ENCODE measurements at regions of chr2 and their contacts with region 1.

Region 1: GRCh38 chr2:204145263-204145751 is 208.7 kb downstream of the ICOS start:
- DNase-seq: peak; percentile 78

Region 2: DNA sequence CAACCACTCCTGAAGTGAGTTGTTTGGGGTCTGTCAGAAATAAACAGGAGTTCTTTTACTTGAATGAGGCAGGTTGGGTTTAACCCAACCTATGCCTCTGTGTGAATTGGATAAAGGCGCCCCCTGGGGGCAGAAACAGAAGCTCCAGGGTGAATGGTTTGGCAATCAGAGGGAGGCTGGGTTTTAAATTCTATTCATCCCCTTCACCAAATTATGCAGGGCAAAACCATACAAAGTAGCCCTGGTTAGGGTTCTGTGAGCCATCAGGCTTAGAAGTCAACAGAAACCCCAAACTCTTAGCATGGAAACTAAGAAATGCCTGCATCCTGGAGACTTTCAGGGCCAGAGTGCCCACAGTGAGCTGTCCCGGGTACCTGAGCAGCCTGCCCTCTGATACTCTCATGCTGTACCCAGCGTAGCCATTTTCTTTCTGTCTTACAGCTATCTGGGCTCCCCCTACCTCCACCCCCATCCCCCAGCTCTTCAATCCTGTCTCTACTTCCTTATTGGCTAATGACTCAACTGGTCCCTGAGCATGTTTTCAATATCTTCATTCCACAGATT is 32.8 kb after region 1 on chr2:
- CTCF ChIA-PET with region 1: interaction called, 10 read pairs
- POLR2A ChIA-PET with region 1: no interaction called
- DNase-seq: peak; percentile 45

Region 3: DNA sequence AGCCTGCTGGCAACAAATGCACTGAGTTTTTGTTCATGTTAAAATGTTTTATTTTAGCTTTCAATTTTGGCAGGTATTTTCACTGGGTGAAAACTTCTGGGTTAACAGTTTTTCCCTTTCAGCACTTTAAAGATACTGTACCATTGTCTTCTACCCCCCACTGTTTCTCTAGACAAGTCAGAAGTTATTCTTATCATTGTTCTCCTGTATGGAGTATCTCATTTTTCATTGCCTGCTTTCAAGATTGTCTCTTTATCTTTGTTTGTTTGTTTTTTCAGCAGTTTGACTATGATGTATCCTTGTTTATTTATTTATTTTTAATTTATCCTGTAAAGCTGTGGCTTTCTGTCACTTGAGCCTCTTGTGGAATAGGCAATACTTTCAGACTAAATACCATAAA is 68.3 kb after region 1 on chr2:
- CTCF ChIA-PET with region 1: no interaction called
- POLR2A ChIA-PET with region 1: no interaction called
- DNase-seq: no peak

Region 4: GRCh38 chr2:204239411-204240165 is 94.3 kb after region 1 on chr2:
- CTCF ChIA-PET with region 1: no interaction called
- POLR2A ChIA-PET with region 1: no interaction called
- DNase-seq: no peak

Measured in HEK293T (cell line).